GM10248 (cell line): ENCODE measurements at regions of chr19 and their contacts with region 1.

Region 1: DNA sequence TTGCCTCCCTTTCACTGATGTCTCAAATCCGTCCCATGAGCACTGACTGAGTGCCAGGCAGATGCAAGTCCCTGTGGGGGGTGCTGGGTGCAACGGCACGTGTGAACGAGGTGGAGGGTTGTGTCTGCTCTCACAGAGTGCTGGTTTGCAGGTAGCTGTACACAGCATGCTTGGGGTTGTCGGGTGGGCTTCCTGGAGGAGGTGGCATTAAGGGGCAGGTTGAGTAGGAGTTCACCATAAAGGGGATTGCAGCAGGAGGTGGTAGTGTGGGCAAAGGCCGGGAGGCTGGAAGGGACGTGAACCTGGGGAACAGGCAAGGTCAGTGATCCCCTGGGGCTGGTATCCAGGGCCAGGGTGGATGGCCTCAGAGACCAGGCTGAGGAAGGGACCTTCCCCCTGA is 17.2 kb downstream of the COLGALT1 start:
- DNase-seq: no peak
- CTCF ChIP-seq: no peak

Region 2: GRCh38 chr19:17555480-17555928 is 17.1 kb before region 1 on chr19 and contains the start of gene COLGALT1:
- CTCF ChIA-PET with region 1: interaction called, 17 read pairs
- POLR2A ChIA-PET with region 1: no interaction called
- DNase-seq: peak; percentile 99
- CTCF ChIP-seq: no peak

Region 3: GRCh38 chr19:17562561-17562960 is 10.1 kb before region 1 on chr19:
- CTCF ChIA-PET with region 1: interaction called, 20 read pairs
- POLR2A ChIA-PET with region 1: interaction called, 3 read pairs
- DNase-seq: no peak
- CTCF ChIP-seq: no peak